MCF 10A (cell line): ENCODE measurements at regions of chr12 and their contacts with region 1.

Region 1: GRCh38 chr12:91382081-91382543 is 199.5 kb upstream of the DCN start:
- DNase-seq: peak; percentile 84
- H3K4me3 Mint-ChIP-seq: peak overlapping the region; percentile 78
- H3K27ac Mint-ChIP-seq: peak overlapping the region; percentile 21
- H3K4me1 Mint-ChIP-seq: peaks cover 19% of the 10 kb centered on the region
- H3K27me3 Mint-ChIP-seq: no peaks in the 10 kb centered on the region
- CTCF ChIP-seq: peak; percentile 85

Region 2: DNA sequence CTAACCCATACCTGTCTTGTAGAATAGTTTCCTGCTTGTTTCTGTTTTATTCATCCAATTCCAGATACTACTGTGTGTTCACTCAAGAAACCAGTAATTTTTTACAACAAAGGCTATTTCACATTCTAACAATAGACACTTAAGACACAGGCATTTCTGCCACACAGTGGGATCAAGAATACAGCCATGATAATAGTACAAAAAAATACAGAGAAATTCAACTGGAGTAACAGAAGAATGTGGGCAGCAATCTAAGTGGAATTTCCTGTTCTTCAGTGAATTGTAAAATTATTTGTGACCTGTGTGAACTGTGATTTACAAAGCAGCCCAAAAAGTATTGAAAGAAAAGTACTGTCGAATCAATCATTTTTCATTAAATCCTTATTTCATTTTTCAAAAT is 710.0 kb before region 1 on chr12:
- CTCF ChIA-PET with region 1: no interaction called
- POLR2A ChIA-PET with region 1: no interaction called
- intact Hi-C with region 1: no loop called
- DNase-seq: no peak
- H3K4me3 Mint-ChIP-seq: no peak overlapping the region
- H3K27ac Mint-ChIP-seq: no peak overlapping the region
- H3K4me1 Mint-ChIP-seq: no peaks in the 10 kb centered on the region
- H3K27me3 Mint-ChIP-seq: no peaks in the 10 kb centered on the region
- CTCF ChIP-seq: no peak

Region 3: GRCh38 chr12:91278126-91278525 is 104.0 kb before region 1 on chr12:
- CTCF ChIA-PET with region 1: no interaction called
- POLR2A ChIA-PET with region 1: no interaction called
- intact Hi-C with region 1: no loop called
- DNase-seq: no peak
- H3K4me3 Mint-ChIP-seq: no peak overlapping the region
- H3K27ac Mint-ChIP-seq: no peak overlapping the region
- H3K4me1 Mint-ChIP-seq: no peaks in the 10 kb centered on the region
- H3K27me3 Mint-ChIP-seq: peaks cover 66% of the 10 kb centered on the region
- CTCF ChIP-seq: no peak

Region 4: GRCh38 chr12:91400271-91400670 is 18.2 kb after region 1 on chr12:
- CTCF ChIA-PET with region 1: interaction called, 10 read pairs
- POLR2A ChIA-PET with region 1: interaction called, 4 read pairs
- intact Hi-C with region 1: no loop called
- DNase-seq: no peak
- H3K4me3 Mint-ChIP-seq: no peak overlapping the region
- H3K27ac Mint-ChIP-seq: no peak overlapping the region
- H3K4me1 Mint-ChIP-seq: peaks cover 7% of the 10 kb centered on the region
- H3K27me3 Mint-ChIP-seq: no peaks in the 10 kb centered on the region
- CTCF ChIP-seq: no peak

Region 5: GRCh38 chr12:91722072-91722471 is 340.0 kb after region 1 on chr12:
- CTCF ChIA-PET with region 1: interaction called, 3 read pairs
- POLR2A ChIA-PET with region 1: interaction called, 15 read pairs
- intact Hi-C with region 1: no loop called
- DNase-seq: peak; percentile 50
- H3K4me3 Mint-ChIP-seq: no peak overlapping the region
- H3K27ac Mint-ChIP-seq: peak overlapping the region; percentile 42
- H3K4me1 Mint-ChIP-seq: peaks cover 42% of the 10 kb centered on the region
- H3K27me3 Mint-ChIP-seq: no peaks in the 10 kb centered on the region
- CTCF ChIP-seq: no peak

Region 6: GRCh38 chr12:91818227-91819131 is 436.4 kb after region 1 on chr12:
- CTCF ChIA-PET with region 1: interaction called, 9 read pairs
- POLR2A ChIA-PET with region 1: interaction called, 34 read pairs
- intact Hi-C with region 1: loop called (anchors 5 kb)
- DNase-seq: peak; percentile 18
- H3K4me3 Mint-ChIP-seq: peak overlapping the region; percentile 8
- H3K27ac Mint-ChIP-seq: peak overlapping the region; percentile 42
- H3K4me1 Mint-ChIP-seq: peaks cover 31% of the 10 kb centered on the region
- H3K27me3 Mint-ChIP-seq: no peaks in the 10 kb centered on the region
- CTCF ChIP-seq: no peak

Region 7: GRCh38 chr12:92244036-92244435 is 861.9 kb after region 1 on chr12:
- CTCF ChIA-PET with region 1: interaction called, 13 read pairs
- POLR2A ChIA-PET with region 1: interaction called, 5 read pairs
- intact Hi-C with region 1: no loop called
- DNase-seq: peak; percentile 25
- H3K4me3 Mint-ChIP-seq: peak overlapping the region; percentile 8
- H3K27ac Mint-ChIP-seq: peak overlapping the region; percentile 25
- H3K4me1 Mint-ChIP-seq: peaks cover 16% of the 10 kb centered on the region
- H3K27me3 Mint-ChIP-seq: no peaks in the 10 kb centered on the region
- CTCF ChIP-seq: no peak

Region 8: GRCh38 chr12:92570056-92570753 is 1188.1 kb after region 1 on chr12:
- CTCF ChIA-PET with region 1: interaction called, 12 read pairs
- POLR2A ChIA-PET with region 1: interaction called, 5 read pairs
- intact Hi-C with region 1: loop called (anchors 1 kb)
- DNase-seq: peak; percentile 89
- H3K4me3 Mint-ChIP-seq: no peak overlapping the region
- H3K27ac Mint-ChIP-seq: no peak overlapping the region
- H3K4me1 Mint-ChIP-seq: no peaks in the 10 kb centered on the region
- H3K27me3 Mint-ChIP-seq: no peaks in the 10 kb centered on the region
- CTCF ChIP-seq: peak; percentile 71